A549 (cell line): ENCODE measurements at regions of chr17 and their contacts with region 1.

Region 1: DNA sequence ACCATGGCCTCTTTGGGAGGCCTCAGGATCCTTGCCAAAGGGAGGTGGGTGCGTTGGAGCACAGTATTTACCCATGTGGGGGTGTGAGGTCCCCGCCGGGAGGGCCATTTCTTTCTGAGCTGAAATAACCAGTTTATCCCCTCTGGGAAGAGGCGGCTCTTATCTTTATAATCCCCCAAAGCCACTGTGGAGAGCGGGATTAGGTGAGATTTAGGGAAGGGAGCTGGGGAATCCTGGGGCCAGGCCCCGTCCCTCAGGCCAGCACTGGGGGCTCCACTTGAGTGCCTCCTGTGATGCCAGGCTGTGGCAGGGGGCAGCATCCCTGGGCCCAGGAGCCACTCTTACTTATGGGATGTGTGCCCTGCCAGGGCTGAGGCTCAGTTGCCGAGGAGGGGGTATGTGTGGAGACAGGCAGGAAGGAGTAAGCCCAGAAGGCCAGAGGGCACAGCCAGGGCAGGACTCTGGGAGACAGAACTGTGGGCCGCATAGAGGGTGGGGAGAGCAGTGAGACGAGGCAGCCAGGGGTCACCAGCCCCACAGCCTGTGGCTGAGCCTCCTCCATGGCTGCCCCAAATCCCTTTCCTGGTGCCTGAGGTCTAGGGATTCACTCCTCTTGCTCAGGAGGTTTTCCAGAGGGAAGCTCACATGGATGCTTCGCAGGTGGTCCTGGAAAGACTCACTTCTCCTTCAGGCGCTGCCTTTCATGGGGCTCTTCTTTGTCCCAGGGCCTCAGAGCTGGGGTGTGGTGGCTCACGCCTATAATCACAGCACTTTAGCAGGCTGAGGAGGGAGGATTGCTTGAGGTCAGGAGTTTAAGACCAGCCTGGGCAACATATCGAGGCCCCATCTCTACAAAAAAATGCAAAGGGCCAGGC is 25.0 kb downstream of the TMEM94 start:
- DNase-seq: no peak
- ATAC-seq: peak in 1 of 2 experiments; percentile 24; a peak in 3 of 6 replicates
- H3K4me3 ChIP-seq: no peak overlapping the region
- H3K27ac ChIP-seq: peak overlapping the region in 1 of 2 experiments; percentile 9; a peak in 1 of 6 replicates
- H3K4me1 ChIP-seq: no peaks in the 10 kb centered on the region
- CTCF ChIP-seq: no peak
- EP300 ChIP-seq: no peak
- POLR2A ChIP-seq: no peak
- RAD21 ChIP-seq: no peak

Region 2: DNA sequence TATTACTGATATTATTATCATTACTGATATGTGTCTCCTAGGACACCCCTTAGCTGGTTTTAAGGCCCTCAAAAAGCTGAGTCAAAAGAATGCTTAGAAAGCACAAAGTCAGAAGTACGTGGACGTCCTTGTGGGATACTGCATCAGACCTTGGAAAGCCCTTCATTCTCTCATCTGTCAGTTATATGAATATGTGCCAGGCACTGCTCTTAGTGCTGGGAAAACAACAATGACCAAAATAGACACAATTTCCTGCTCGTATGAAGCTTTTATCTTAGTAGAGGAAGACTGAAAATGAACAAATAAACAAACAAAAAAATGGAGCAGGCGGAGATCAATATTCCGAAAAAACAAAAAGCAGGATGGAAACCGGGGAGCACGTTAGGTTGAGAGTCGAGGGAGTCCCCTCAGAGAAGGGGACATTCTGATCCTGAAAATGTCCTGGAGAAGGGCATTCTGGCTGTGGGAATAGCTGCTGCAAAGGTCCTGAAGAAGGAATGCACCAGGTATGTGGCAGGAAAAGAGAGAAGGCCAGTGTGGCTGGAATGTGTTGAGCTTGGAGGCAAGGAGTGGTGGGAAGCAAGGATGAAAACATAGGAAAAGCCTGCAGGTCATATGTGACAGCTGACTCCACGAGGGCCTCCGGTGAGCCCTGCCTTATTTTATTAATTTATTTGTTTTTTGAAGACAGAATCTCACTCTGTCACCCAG is 40.5 kb before region 1 on chr17:
- CTCF ChIA-PET with region 1: no interaction called
- POLR2A ChIA-PET with region 1: no interaction called
- DNase-seq: no peak
- ATAC-seq: no peak
- H3K4me3 ChIP-seq: no peak overlapping the region
- H3K27ac ChIP-seq: no peak overlapping the region
- H3K4me1 ChIP-seq: peaks cover 11% of the 10 kb centered on the region
- CTCF ChIP-seq: no peak
- EP300 ChIP-seq: no peak
- POLR2A ChIP-seq: no peak
- RAD21 ChIP-seq: no peak

Region 3: DNA sequence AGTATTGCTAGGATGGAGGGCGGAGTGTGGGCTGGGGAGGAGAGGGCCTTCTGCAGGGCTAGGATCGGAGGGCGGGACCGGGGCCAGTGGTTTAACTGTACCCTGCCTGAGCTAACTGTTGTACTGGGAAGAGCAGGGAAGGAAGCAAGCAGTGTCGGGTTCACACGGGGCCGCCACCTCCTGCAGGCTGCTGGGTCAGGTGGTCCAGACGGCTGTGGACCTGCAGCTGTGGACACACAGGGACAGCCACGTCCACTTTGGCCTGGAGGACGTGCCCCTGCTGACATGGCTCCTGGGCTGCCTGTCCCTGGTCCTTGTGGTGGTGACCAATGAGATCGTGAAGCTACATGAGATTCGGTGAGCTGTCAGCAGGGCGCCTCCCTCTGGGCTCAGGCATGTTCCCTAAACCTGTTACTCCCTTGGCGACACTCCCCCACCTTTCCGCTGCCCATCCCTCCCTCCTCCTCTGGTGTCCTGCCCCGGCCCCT is 17.3 kb after region 1 on chr17:
- CTCF ChIA-PET with region 1: interaction called, 26 read pairs
- POLR2A ChIA-PET with region 1: no interaction called
- DNase-seq: peak in 1 of 2 experiments; percentile 44
- ATAC-seq: peak; percentile 11 to 26; a peak in 2 of 6 replicates
- H3K4me3 ChIP-seq: no peak overlapping the region
- H3K27ac ChIP-seq: no peak overlapping the region
- H3K4me1 ChIP-seq: no peaks in the 10 kb centered on the region
- CTCF ChIP-seq: no peak; the same call in 2 of the 3 replicates
- EP300 ChIP-seq: no peak
- POLR2A ChIP-seq: no peak
- RAD21 ChIP-seq: no peak